HCT116 (cell line): ENCODE measurements at regions of chr9 and their contacts with region 1.

Region 1: DNA sequence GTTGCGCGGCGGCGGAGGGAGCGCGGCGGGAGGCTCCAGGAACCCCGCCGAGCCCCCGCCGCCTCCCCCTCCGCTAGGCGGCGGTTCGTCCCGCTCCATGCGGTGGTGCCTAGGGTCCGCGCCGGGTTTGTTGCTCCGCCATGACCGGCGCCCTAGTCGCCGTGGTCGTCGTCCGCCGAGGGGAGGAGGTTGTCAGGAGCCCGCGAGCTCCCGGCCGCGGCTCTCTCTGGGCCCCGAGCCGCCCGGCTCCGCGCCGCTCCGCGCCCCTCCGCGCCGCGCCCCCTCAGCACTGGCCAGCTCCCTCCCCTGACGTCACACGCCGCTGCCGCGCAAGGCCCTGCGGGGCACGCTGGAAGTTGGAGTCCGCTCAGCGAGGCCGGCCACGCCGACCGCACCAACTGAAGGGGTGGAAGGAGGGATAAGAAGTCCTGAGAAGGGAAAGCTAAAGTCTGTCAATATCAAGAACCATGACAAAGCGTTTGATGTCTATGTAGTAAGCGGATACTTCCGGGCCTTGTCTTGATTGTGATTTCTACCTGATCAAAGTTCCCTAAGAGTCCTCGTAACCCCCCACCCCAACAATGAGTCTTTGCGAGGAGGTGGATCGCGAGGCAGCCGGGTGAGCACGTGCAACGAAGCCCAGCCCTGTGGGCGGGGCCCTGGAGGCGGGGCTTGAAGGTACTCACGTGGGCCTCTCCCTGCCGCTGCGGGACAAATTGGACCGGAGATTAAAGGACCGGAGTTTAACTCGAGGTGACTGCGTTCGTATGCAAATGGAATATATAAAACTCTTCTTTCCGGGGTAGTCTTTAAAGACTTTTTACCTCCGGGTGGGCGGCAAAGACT is at the start of gene NR6A1:
- DNase-seq: peak; percentile 95
- ATAC-seq: peak; percentile 81
- H3K4me3 ChIP-seq: peak within 1 kb of the TSS; percentile 71 to 73
- H3K27ac ChIP-seq: peak within 1 kb of the TSS; percentile 90
- H3K4me1 ChIP-seq: peaks cover 22 to 44% of the 10 kb centered on the region in 2 experiments
- H3K27me3 ChIP-seq: no peaks in the 10 kb centered on the region
- CTCF ChIP-seq: 0 out of 6 replicates have a peak, but pooled peaks of 1 of the 3 experiments have one; percentile 8
- POLR2A ChIP-seq: peak; percentile 47
- RAD21 ChIP-seq: no peak
- total RNA-seq, gene NR6A1: 9.9 TPM

Region 2: GRCh38 chr9:124818431-124819281 is 47.4 kb after region 1 on chr9:
- CTCF ChIA-PET with region 1: interaction called, 10 read pairs
- POLR2A ChIA-PET with region 1: no interaction called
- RAD21 ChIA-PET with region 1: interaction called in 1 of 2 experiments, 3 read pairs
- intact Hi-C with region 1: loop called (anchors 5 kb)
- DNase-seq: peak; percentile 82
- ATAC-seq: peak; percentile 87
- H3K4me3 ChIP-seq: peak overlapping the region in 1 of 2 experiments; percentile 15; a peak in 1 of 4 replicates
- H3K27ac ChIP-seq: peak overlapping the region; percentile 69
- H3K4me1 ChIP-seq: peaks cover 29 to 61% of the 10 kb centered on the region in 2 experiments
- H3K27me3 ChIP-seq: no peaks in the 10 kb centered on the region
- CTCF ChIP-seq: peak in 1 of 3 experiments; percentile 24; a peak in 2 of 6 replicates
- POLR2A ChIP-seq: no peak
- RAD21 ChIP-seq: no peak

Region 3: DNA sequence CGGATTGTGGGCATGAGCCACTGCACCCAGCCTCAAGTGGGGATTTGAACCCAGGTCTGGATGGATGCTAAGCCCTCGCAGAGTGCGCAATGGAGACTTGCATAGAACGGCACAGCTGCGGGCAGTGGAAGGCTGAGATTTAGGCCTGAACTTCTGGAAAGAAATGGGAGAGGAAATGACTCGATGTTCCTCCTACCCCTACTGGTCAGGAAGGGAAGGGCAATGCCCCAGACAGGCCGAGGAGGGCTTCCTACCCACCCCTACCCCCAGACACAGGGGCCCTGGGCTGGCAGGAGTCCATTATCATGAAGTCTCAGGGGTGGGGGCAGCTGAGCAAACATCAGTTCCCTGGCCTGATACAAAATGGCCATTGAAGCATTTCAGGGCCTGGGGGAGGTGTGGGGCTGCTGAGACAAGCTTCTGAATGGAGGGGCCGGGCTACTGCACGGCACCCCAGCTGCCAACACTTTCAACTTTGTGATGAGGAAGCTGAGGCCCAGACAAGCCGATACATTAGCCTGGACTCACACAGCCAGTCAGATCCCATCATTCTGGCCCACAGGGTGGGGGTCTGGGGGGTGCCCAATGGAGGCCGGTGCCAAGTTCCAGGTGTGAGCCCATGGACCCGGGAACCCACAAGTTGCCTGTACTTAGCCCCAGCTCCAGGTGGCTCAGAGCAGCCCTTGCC is 68.5 kb after region 1 on chr9:
- CTCF ChIA-PET with region 1: interaction called, 29 read pairs
- POLR2A ChIA-PET with region 1: no interaction called
- RAD21 ChIA-PET with region 1: no interaction called
- intact Hi-C with region 1: no loop called
- DNase-seq: peak; percentile 33
- ATAC-seq: peak; percentile 65
- H3K4me3 ChIP-seq: no peak overlapping the region
- H3K27ac ChIP-seq: no peak overlapping the region
- H3K4me1 ChIP-seq: peaks cover 26 to 48% of the 10 kb centered on the region in 2 experiments
- H3K27me3 ChIP-seq: no peaks in the 10 kb centered on the region
- CTCF ChIP-seq: peak in 2 of 3 experiments; percentile 66 to 81; a peak in 4 of 6 replicates
- POLR2A ChIP-seq: no peak
- RAD21 ChIP-seq: no peak

Region 4: GRCh38 chr9:124894741-124895170 is 123.5 kb after region 1 on chr9:
- CTCF ChIA-PET with region 1: interaction called, 5 read pairs
- POLR2A ChIA-PET with region 1: interaction called, 7 read pairs
- RAD21 ChIA-PET with region 1: no interaction called
- intact Hi-C with region 1: loop called (anchors 1 kb)
- DNase-seq: peak; percentile 10
- ATAC-seq: peak; percentile 89
- H3K4me3 ChIP-seq: no peak overlapping the region
- H3K27ac ChIP-seq: no peak overlapping the region
- H3K4me1 ChIP-seq: no peaks in the 10 kb centered on the region
- H3K27me3 ChIP-seq: no peaks in the 10 kb centered on the region
- CTCF ChIP-seq: peak; percentile 35 to 56 (median 55); a peak in 5 of 6 replicates
- POLR2A ChIP-seq: no peak
- RAD21 ChIP-seq: peak; percentile 65

Region 5: GRCh38 chr9:125143375-125144090 is 372.3 kb after region 1 on chr9 and contains the start of gene SCAI:
- CTCF ChIA-PET with region 1: interaction called, 4 read pairs
- POLR2A ChIA-PET with region 1: no interaction called
- RAD21 ChIA-PET with region 1: interaction called in 1 of 2 experiments, 7 read pairs
- intact Hi-C with region 1: loop called (anchors 5 kb)
- DNase-seq: peak; percentile 98
- ATAC-seq: peak; percentile 99
- H3K4me3 ChIP-seq: peak within 1 kb of the TSS; percentile 63 to 71
- H3K27ac ChIP-seq: no peak within 1 kb of the TSS; the same call in 1 of the 2 replicates
- H3K4me1 ChIP-seq: peaks cover 7 to 12% of the 10 kb centered on the region in 2 experiments; a peak in 3 of 4 replicates
- H3K27me3 ChIP-seq: no peaks in the 10 kb centered on the region
- CTCF ChIP-seq: peak; percentile 83 to 99 (median 97)
- POLR2A ChIP-seq: no peak
- RAD21 ChIP-seq: peak; percentile 88
- total RNA-seq, gene SCAI: 14.0 TPM

Region 6: GRCh38 chr9:125374443-125375309 is 603.4 kb after region 1 on chr9:
- CTCF ChIA-PET with region 1: interaction called, 3 read pairs
- POLR2A ChIA-PET with region 1: no interaction called
- RAD21 ChIA-PET with region 1: no interaction called
- intact Hi-C with region 1: loop called (anchors 1 kb)
- DNase-seq: peak; percentile 28
- ATAC-seq: peak; percentile 95
- H3K4me3 ChIP-seq: no peak overlapping the region
- H3K27ac ChIP-seq: no peak overlapping the region
- H3K4me1 ChIP-seq: peaks cover 0 to 8% of the 10 kb centered on the region in 2 experiments; a peak in 1 of 4 replicates
- H3K27me3 ChIP-seq: no peaks in the 10 kb centered on the region
- CTCF ChIP-seq: peak; percentile 80 to 86 (median 81)
- POLR2A ChIP-seq: no peak
- RAD21 ChIP-seq: peak; percentile 98